ENCODE measurements at regions of chr6 and their contacts with region 1.

Region 1: DNA sequence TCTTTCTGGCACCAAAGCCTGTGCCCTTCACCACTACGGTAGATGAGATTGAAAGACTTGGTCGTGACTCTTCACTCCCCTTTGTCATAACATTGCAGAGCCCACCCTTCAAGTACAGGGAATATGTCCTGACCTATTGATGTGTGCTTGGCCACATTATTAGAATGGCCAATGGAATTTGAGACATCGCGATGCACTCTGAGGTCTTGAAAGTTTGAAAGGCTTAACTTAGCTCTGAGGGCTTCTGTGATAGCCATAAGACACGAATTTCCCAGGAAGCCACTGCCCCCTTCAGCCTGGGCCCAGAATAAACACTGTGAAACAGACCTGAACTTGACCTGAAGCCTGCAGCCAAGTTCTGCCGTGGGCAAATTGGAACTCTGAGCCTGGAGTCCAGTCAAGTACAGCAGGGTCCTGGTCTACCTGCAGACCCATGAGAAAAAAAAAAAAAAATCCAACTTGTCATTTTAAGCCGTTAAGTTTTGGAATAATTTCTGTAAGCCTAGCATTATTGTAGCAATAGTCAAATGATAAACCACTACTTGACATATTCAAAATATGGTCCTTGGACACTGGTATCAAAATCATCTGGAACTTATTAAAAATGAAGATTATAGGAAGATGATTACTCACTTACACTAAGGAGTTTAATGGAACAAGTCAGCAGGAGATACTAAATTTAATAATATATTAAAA is 36.9 kb upstream of the TRAF3IP2 start:
- DNase-seq: peak; percentile 65
- H3K4me3 ChIP-seq: no peak overlapping the region
- H3K27ac ChIP-seq: no peak overlapping the region
- H3K4me1 ChIP-seq: no peaks in the 10 kb centered on the region
- H3K27me3 ChIP-seq: no peaks in the 10 kb centered on the region
- CTCF ChIP-seq: peak; percentile 54 to 74

Region 2: DNA sequence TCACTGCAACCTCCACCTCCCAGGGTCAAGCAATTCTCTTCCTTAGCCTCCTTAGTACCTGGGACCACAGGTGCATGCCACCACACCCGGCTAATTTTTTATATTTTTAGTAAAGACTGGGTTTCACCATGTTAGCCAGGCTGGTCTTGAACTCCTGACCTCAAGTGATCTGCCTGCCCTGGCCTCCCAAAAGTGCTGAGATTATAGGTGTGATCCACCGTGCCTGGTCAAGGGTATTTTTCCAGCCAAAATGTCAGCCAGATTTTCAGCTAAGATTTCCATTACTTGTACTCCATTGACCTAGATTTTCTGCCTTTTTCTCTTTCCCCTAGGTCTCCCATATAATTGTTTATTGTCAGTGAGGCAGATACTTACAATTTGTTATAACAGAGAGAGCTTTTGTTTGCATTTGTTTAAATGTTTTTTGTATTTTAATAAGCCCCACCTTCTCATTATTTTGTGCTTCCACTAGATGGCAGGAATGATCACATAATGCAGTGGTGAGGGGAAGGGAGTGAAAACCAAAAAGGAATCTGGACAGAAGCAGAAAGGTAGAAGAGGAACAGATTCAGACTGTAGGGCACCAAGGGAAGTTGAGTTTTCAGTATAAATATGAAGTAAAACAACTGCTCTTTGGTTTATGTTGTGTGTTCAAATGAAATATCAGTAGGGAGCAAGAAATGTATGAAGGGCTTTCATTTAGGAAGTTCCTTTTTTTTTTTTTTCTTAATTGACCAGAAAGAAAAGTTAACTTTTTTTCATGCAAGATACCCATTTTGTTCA is 631.1 kb before region 1 on chr6:
- CTCF ChIA-PET with region 1: no interaction called
- dilution Hi-C with region 1: no loop called
- in situ Hi-C with region 1: no loop called
- intact Hi-C with region 1: loop called (anchors 1 kb)
- DNase-seq: peak; percentile 33
- H3K4me3 ChIP-seq: no peak overlapping the region
- H3K27ac ChIP-seq: no peak overlapping the region
- H3K4me1 ChIP-seq: no peaks in the 10 kb centered on the region
- H3K27me3 ChIP-seq: no peaks in the 10 kb centered on the region
- CTCF ChIP-seq: peak; percentile 59 to 63

Region 3: GRCh38 chr6:111361648-111362047 is 281.0 kb before region 1 on chr6:
- CTCF ChIA-PET with region 1: interaction called, 4 read pairs
- dilution Hi-C with region 1: no loop called
- in situ Hi-C with region 1: no loop called
- intact Hi-C with region 1: loop called (anchors 1 kb)
- DNase-seq: peak; percentile 17
- H3K4me3 ChIP-seq: no peak overlapping the region
- H3K27ac ChIP-seq: no peak overlapping the region
- H3K4me1 ChIP-seq: no peaks in the 10 kb centered on the region
- H3K27me3 ChIP-seq: no peaks in the 10 kb centered on the region
- CTCF ChIP-seq: peak; percentile 13 to 55

Region 4: GRCh38 chr6:111382476-111383300 is 259.9 kb before region 1 on chr6:
- CTCF ChIA-PET with region 1: no interaction called
- dilution Hi-C with region 1: no loop called
- in situ Hi-C with region 1: loop called in 1 of 2 experiments (anchors 25 kb)
- intact Hi-C with region 1: no loop called
- DNase-seq: no peak
- H3K4me3 ChIP-seq: no peak overlapping the region
- H3K27ac ChIP-seq: no peak overlapping the region
- H3K4me1 ChIP-seq: no peaks in the 10 kb centered on the region
- H3K27me3 ChIP-seq: no peaks in the 10 kb centered on the region
- CTCF ChIP-seq: no peak

Region 5: GRCh38 chr6:111483736-111484632 is 158.6 kb before region 1 on chr6:
- CTCF ChIA-PET with region 1: no interaction called
- dilution Hi-C with region 1: no loop called
- in situ Hi-C with region 1: no loop called
- intact Hi-C with region 1: loop called (anchors 1 kb)
- DNase-seq: peak; percentile 91
- H3K4me3 ChIP-seq: peak overlapping the region; percentile 65 to 89 (median 84)
- H3K27ac ChIP-seq: peak overlapping the region; percentile 81
- H3K4me1 ChIP-seq: peaks cover 21% of the 10 kb centered on the region
- H3K27me3 ChIP-seq: no peaks in the 10 kb centered on the region
- CTCF ChIP-seq: no peak

Region 6: GRCh38 chr6:111573892-111574797 is 68.5 kb before region 1 on chr6:
- CTCF ChIA-PET with region 1: no interaction called
- dilution Hi-C with region 1: no loop called
- in situ Hi-C with region 1: no loop called
- intact Hi-C with region 1: loop called (anchors 2 kb)
- DNase-seq: peak; percentile 80
- H3K4me3 ChIP-seq: no peak overlapping the region
- H3K27ac ChIP-seq: peak overlapping the region; percentile 66
- H3K4me1 ChIP-seq: peaks cover 36% of the 10 kb centered on the region
- H3K27me3 ChIP-seq: no peaks in the 10 kb centered on the region
- CTCF ChIP-seq: no peak

Region 7: GRCh38 chr6:111605100-111605751 is 37.4 kb before region 1 on chr6:
- CTCF ChIA-PET with region 1: no interaction called
- dilution Hi-C with region 1: no loop called
- in situ Hi-C with region 1: no loop called
- intact Hi-C with region 1: loop called (anchors 2 kb)
- DNase-seq: peak; percentile 54
- H3K4me3 ChIP-seq: peak overlapping the region; percentile 61 to 85 (median 83)
- H3K27ac ChIP-seq: peak overlapping the region; percentile 97
- H3K4me1 ChIP-seq: peaks cover 41% of the 10 kb centered on the region
- H3K27me3 ChIP-seq: no peaks in the 10 kb centered on the region
- CTCF ChIP-seq: no peak

Region 8: DNA sequence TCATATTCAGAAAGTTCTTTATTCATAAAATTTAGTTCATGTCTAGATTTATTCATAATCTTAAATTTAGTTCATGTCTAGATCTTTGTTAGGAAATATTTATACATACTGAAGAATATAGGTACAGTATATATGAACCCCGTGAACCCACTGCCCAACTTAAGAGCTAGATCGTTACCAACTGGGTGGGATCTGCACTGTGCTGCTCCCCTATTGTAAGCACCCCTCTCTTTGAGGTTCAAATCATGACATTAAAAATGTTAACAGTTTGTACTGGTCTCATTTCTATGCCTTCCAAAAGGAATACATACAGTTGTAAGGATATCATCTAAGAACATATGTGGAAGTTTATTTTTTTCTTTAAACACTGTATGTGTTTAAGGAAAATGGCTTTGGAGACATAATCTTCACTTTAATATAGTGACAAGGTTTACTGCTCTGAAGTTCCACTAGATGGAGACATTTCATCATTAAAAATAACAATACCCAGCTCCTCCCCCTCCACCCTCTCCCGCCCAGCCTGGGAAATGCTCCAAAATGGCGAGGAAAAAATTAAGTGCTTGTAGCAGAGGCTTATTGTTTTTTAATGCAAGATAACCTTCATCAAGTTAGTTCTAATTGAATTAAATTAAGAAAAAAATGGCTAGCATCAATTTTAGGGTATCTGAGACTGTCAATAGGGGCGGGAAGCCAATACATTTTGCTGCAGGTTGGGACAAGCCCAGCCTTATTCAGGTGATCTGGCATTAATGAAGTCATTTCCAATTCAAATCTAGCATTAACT is 67.2 kb after region 1 on chr6:
- CTCF ChIA-PET with region 1: no interaction called
- dilution Hi-C with region 1: no loop called
- in situ Hi-C with region 1: no loop called
- intact Hi-C with region 1: no loop called
- DNase-seq: peak; percentile 54
- H3K4me3 ChIP-seq: peak overlapping the region in 2 of 3 experiments; percentile 11 to 22
- H3K27ac ChIP-seq: peak overlapping the region; percentile 28
- H3K4me1 ChIP-seq: peaks cover 8% of the 10 kb centered on the region
- H3K27me3 ChIP-seq: no peaks in the 10 kb centered on the region
- CTCF ChIP-seq: peak; percentile 56 to 61